CD8-positive, alpha-beta T cell (primary cell): ENCODE measurements at regions of chr2 and their contacts with region 1.

Region 1: GRCh38 chr2:202178342-202178958 is 59.9 kb downstream of the SUMO1 start:
- DNase-seq: peak; percentile 11 to 70 (median 52)
- ATAC-seq: peak; percentile 61
- H3K4me3 ChIP-seq: no peak overlapping the region
- H3K4me3 Mint-ChIP-seq: no peak overlapping the region
- H3K27ac ChIP-seq: no peak overlapping the region
- H3K27ac Mint-ChIP-seq: no peak overlapping the region
- H3K4me1 ChIP-seq: no peaks in the 10 kb centered on the region
- H3K4me1 Mint-ChIP-seq: no peaks in the 10 kb centered on the region
- H3K27me3 ChIP-seq: no peaks in the 10 kb centered on the region
- H3K27me3 Mint-ChIP-seq: peaks cover 10% of the 10 kb centered on the region
- CTCF ChIP-seq: peak; percentile 88

Region 2: GRCh38 chr2:201661366-201661765 is 517.1 kb before region 1 on chr2:
- CTCF ChIA-PET with region 1: no interaction called
- POLR2A ChIA-PET with region 1: no interaction called
- intact Hi-C with region 1: loop called in 1 of 2 experiments (anchors 1 kb)
- DNase-seq: no peak
- ATAC-seq: no peak
- H3K4me3 ChIP-seq: no peak overlapping the region
- H3K4me3 Mint-ChIP-seq: no peak overlapping the region
- H3K27ac ChIP-seq: no peak overlapping the region
- H3K27ac Mint-ChIP-seq: no peak overlapping the region
- H3K4me1 ChIP-seq: no peaks in the 10 kb centered on the region
- H3K4me1 Mint-ChIP-seq: peaks cover 2% of the 10 kb centered on the region
- H3K27me3 ChIP-seq: no peaks in the 10 kb centered on the region
- H3K27me3 Mint-ChIP-seq: peaks cover 6% of the 10 kb centered on the region
- CTCF ChIP-seq: no peak

Region 3: GRCh38 chr2:201754717-201755415 is 423.6 kb before region 1 on chr2:
- CTCF ChIA-PET with region 1: no interaction called
- POLR2A ChIA-PET with region 1: no interaction called
- intact Hi-C with region 1: loop called (anchors 1 to 2 kb)
- DNase-seq: no peak
- ATAC-seq: no peak
- H3K4me3 ChIP-seq: no peak overlapping the region
- H3K4me3 Mint-ChIP-seq: no peak overlapping the region
- H3K27ac ChIP-seq: no peak overlapping the region
- H3K27ac Mint-ChIP-seq: no peak overlapping the region
- H3K4me1 ChIP-seq: no peaks in the 10 kb centered on the region
- H3K4me1 Mint-ChIP-seq: no peaks in the 10 kb centered on the region
- H3K27me3 ChIP-seq: no peaks in the 10 kb centered on the region
- H3K27me3 Mint-ChIP-seq: no peaks in the 10 kb centered on the region
- CTCF ChIP-seq: no peak

Region 4: GRCh38 chr2:201795607-201796477 is 382.6 kb before region 1 on chr2:
- CTCF ChIA-PET with region 1: no interaction called
- POLR2A ChIA-PET with region 1: no interaction called
- intact Hi-C with region 1: loop called in 1 of 2 experiments (anchors 5 kb)
- DNase-seq: peak in 1 of 9 experiments; percentile 13
- ATAC-seq: no peak
- H3K4me3 ChIP-seq: no peak overlapping the region
- H3K4me3 Mint-ChIP-seq: no peak overlapping the region
- H3K27ac ChIP-seq: no peak overlapping the region
- H3K27ac Mint-ChIP-seq: no peak overlapping the region
- H3K4me1 ChIP-seq: no peaks in the 10 kb centered on the region
- H3K4me1 Mint-ChIP-seq: no peaks in the 10 kb centered on the region
- H3K27me3 ChIP-seq: peaks cover 0 to 3% of the 10 kb centered on the region in 2 experiments
- H3K27me3 Mint-ChIP-seq: peaks cover 10% of the 10 kb centered on the region
- CTCF ChIP-seq: no peak